ENCODE measurements at regions of chr14 and their contacts with region 1.

Region 1: DNA sequence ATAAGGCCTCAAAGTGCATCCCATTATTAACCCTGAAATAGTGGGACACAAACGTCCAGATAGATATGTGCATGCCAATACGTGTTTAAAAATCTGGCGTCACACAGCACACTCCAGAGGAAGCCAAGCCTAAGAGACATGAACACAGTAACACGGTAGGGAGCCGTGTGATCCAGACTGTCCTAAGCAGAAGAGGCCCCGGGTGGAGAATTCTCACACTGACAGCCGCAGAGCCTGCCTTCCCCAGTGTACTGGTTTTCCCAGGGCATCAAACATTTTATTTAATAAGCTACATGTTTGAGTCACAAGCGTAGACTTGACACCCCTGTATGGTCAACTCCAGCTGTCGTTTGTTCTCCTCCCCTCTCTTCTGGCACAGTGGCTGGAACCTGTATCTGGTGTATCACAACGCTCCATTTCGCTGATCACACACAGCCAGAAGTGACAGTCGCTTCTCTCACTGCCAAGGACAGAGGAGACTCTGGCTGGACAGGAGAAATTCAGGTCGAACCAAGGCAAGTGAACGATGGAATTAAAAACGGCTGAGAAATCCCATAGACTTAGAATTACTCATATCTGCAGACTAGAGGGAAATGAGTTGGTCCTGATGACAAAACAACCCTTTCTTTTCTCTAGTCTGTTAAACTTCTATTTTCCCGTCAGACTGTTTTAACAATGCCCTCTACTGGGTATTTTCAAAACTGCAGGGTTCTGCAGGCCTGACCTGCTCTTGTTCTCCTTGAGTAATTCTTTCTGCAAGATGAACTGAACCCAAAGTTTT is 359.9 kb downstream of the RGS6 start:
- DNase-seq: peak; percentile 61
- H3K4me3 Mint-ChIP-seq: no peak overlapping the region
- H3K27ac Mint-ChIP-seq: no peak overlapping the region
- H3K4me1 Mint-ChIP-seq: no peaks in the 10 kb centered on the region
- H3K27me3 Mint-ChIP-seq: peaks cover 56% of the 10 kb centered on the region
- CTCF ChIP-seq: peak; percentile 70

Region 2: GRCh38 chr14:71720978-71721624 is 571.0 kb before region 1 on chr14:
- CTCF ChIA-PET with region 1: no interaction called
- POLR2A ChIA-PET with region 1: no interaction called
- intact Hi-C with region 1: loop called (anchors 2 kb)
- DNase-seq: peak; percentile 79
- H3K4me3 Mint-ChIP-seq: no peak overlapping the region
- H3K27ac Mint-ChIP-seq: peak overlapping the region; percentile 88
- H3K4me1 Mint-ChIP-seq: peaks cover 17% of the 10 kb centered on the region
- H3K27me3 Mint-ChIP-seq: no peaks in the 10 kb centered on the region
- CTCF ChIP-seq: peak; percentile 53

Region 3: GRCh38 chr14:71932220-71932981 is 359.7 kb before region 1 on chr14 and contains the start of gene RGS6:
- CTCF ChIA-PET with region 1: interaction called, 3 read pairs
- POLR2A ChIA-PET with region 1: no interaction called
- intact Hi-C with region 1: loop called (anchors 10 kb)
- DNase-seq: peak; percentile 35
- H3K4me3 Mint-ChIP-seq: no peak within 1 kb of the TSS
- H3K27ac Mint-ChIP-seq: no peak within 1 kb of the TSS
- H3K4me1 Mint-ChIP-seq: no peaks in the 10 kb centered on the region
- H3K27me3 Mint-ChIP-seq: peaks cover 50% of the 10 kb centered on the region
- CTCF ChIP-seq: no peak
- total RNA-seq, gene RGS6: not detected in 2 replicates

Region 4: GRCh38 chr14:72023722-72024407 is 268.2 kb before region 1 on chr14:
- CTCF ChIA-PET with region 1: interaction called, 9 read pairs
- POLR2A ChIA-PET with region 1: no interaction called
- intact Hi-C with region 1: loop called (anchors 1 kb)
- DNase-seq: peak; percentile 67
- H3K4me3 Mint-ChIP-seq: peak overlapping the region; percentile 24
- H3K27ac Mint-ChIP-seq: no peak overlapping the region
- H3K4me1 Mint-ChIP-seq: peaks cover 14% of the 10 kb centered on the region
- H3K27me3 Mint-ChIP-seq: peaks cover 9% of the 10 kb centered on the region
- CTCF ChIP-seq: peak; percentile 53

Region 5: DNA sequence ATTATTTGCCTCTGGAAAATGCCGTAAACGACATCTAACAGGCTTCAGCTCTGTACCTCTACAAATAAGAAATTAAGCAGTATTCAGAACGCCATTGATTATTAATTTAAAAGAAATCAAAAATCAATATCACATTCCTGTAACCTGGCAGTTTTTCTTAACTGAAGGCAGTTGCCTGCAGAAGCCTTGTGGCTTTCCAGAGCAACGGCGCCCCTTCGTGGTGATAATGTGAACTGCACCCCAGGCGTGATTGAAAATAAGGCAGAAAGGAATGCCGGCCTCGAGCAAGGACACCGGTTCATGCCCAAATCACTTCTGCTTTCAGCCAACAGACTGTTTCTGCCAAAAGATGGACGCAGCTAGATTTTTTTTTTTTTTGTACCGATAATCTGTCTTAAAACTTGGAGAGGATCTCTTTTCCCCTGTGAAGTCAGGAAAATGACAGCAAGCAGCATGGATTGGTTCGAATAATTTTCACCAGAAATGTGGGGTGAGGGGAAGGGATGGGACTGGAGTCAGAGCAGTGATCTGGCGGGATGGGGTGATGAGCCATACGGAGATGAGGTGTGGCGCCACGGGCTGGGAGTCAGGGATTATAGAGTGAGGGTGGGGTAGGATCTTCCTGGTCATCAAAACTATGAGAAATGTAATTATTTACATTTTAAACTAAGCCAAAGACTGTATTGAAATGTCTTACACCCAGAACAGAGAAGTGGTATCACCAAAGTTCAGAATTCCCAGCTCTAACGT is 128.8 kb after region 1 on chr14:
- CTCF ChIA-PET with region 1: interaction called, 4 read pairs
- POLR2A ChIA-PET with region 1: no interaction called
- intact Hi-C with region 1: loop called (anchors 1 kb)
- DNase-seq: peak; percentile 72
- H3K4me3 Mint-ChIP-seq: no peak overlapping the region
- H3K27ac Mint-ChIP-seq: no peak overlapping the region
- H3K4me1 Mint-ChIP-seq: no peaks in the 10 kb centered on the region
- H3K27me3 Mint-ChIP-seq: no peaks in the 10 kb centered on the region
- CTCF ChIP-seq: peak; percentile 96

Measured in MCF 10A (cell line).